Posterior cingulate gyrus (tissue), 11 donors: ENCODE measurements at regions of chr5 and their contacts with region 1.

Region 1: GRCh38 chr5:149141224-149141956 is at the start of gene ABLIM3:
- DNase-seq: peak; percentile 59 to 97 (median 74)

Region 2: GRCh38 chr5:149228618-149229297 is 87.4 kb after region 1 on chr5:
- intact Hi-C with region 1: loop called (anchors 1 kb)
- DNase-seq: no peak

Region 3: DNA sequence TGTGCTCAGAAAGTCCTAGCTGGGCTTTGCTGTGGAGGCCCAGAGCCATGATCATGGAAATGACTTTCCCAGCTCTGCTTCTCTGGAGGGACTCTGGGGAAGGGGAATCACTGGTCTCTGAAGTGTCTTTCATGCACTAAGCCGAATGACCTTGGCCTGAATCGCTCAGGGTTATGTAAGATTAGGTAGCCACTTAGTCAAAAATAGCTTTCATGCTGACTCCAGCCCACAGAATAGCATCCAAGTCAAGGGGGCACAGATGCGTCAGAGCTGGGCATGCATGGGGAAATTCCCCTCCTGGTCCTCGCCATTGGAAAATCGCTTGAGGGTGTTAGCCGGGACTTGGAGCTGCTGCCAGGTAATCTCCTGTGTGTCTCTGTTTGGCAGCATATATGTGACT is 552.6 kb after region 1 on chr5:
- intact Hi-C with region 1: no loop called
- DNase-seq: no peak